Mammary epithelial cell (primary cell): ENCODE measurements at regions of chr2 and their contacts with region 1.

Region 1: DNA sequence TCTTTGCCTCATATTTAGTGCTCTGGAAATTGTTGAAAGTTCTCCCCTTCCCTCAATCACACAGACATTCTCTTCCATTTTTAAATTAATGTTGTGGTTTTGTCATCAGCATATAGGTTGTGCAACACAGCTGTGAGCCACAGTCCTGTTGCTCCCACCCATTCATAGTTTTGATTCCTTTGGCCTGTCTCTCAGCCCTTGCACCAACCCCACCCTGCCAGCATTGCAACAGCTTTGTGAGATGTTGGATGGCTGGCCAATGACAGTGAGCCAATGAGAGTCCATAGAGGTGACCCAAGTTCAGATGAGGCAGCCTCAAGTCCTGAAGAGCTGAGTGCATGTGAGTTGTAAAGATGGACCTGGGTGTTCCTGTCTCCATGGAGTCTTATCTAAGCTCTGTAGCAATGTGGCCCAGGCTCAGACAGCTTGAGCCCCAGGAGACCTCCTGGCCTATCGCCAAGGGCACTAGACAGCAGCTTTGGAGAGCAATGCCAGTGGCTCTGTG is 775.5 kb downstream of the RNF144A start:
- DNase-seq: peak; percentile 96
- H3K4me3 ChIP-seq: no peak overlapping the region
- H3K27ac ChIP-seq: peak overlapping the region; percentile 79
- H3K4me1 ChIP-seq: peaks cover 19% of the 10 kb centered on the region
- H3K27me3 ChIP-seq: no peaks in the 10 kb centered on the region
- CTCF ChIP-seq: no peak

Region 2: DNA sequence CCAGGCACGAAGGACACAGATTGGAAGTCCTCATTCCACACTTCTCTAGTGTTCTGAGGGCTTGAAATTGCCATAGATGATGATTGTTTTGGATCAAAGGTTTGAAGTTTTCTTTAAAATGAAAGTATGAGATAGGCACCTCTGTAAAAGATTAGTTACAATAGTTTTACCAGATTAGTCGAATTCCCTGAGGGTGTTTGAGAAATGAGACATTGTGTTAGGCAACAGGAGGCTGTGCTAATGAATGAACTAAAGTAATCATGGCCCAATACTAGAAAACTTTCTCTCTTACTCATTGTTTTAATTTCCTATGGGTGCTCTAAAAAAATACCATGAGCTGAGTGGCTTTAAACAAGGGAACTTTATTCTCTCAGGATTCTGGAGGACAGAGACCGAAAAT is 353.7 kb before region 1 on chr2:
- CTCF ChIA-PET with region 1: no interaction called
- dilution Hi-C with region 1: no loop called
- in situ Hi-C with region 1: no loop called
- intact Hi-C with region 1: no loop called
- DNase-seq: no peak
- H3K4me3 ChIP-seq: no peak overlapping the region
- H3K27ac ChIP-seq: no peak overlapping the region
- H3K4me1 ChIP-seq: no peaks in the 10 kb centered on the region
- H3K27me3 ChIP-seq: no peaks in the 10 kb centered on the region
- CTCF ChIP-seq: no peak

Region 3: DNA sequence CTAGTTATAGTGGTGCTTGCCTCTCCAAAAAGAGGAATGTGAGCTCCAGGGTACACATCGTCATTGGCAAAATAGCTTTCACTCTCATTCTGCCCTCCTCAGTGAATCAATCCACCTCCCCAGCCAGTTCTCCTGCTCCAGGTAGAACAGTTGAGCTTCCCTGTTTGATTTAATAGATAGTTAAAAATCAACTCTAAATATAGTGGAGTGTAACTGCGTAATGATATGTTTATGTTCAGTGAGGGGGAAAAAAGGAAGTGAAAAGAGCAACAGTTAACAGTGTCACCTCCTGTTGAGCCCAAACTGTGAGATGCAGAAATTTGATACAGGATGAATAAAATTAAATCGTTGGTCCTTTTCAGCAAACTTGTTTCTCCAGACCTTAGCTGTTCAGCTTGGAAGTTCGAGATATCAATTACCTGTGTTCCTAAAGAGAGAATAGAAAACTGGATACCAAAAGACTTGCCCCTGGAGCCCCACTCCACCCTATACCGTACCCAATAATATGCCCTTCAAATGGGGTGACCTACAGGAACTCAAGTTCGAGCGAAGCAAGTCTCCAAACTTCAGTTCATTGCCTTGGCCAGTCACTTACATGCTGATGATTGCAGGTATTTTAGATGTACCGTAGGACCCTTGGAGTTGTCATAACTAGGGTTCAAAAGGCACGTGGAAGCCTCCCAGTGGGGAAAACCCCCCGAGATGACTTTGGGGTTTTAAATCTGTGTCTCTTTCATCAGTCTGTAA is 67.1 kb before region 1 on chr2:
- CTCF ChIA-PET with region 1: no interaction called
- dilution Hi-C with region 1: loop called (anchors 5 kb)
- in situ Hi-C with region 1: no loop called
- intact Hi-C with region 1: no loop called
- DNase-seq: no peak
- H3K4me3 ChIP-seq: no peak overlapping the region
- H3K27ac ChIP-seq: no peak overlapping the region
- H3K4me1 ChIP-seq: peaks cover 12% of the 10 kb centered on the region
- H3K27me3 ChIP-seq: no peaks in the 10 kb centered on the region
- CTCF ChIP-seq: no peak

Region 4: GRCh38 chr2:7681881-7682461 is 10.7 kb before region 1 on chr2:
- CTCF ChIA-PET with region 1: no interaction called
- dilution Hi-C with region 1: no loop called
- in situ Hi-C with region 1: no loop called
- intact Hi-C with region 1: no loop called
- DNase-seq: no peak
- H3K4me3 ChIP-seq: no peak overlapping the region
- H3K27ac ChIP-seq: no peak overlapping the region
- H3K4me1 ChIP-seq: peaks cover 10% of the 10 kb centered on the region
- H3K27me3 ChIP-seq: no peaks in the 10 kb centered on the region
- CTCF ChIP-seq: no peak

Region 5: DNA sequence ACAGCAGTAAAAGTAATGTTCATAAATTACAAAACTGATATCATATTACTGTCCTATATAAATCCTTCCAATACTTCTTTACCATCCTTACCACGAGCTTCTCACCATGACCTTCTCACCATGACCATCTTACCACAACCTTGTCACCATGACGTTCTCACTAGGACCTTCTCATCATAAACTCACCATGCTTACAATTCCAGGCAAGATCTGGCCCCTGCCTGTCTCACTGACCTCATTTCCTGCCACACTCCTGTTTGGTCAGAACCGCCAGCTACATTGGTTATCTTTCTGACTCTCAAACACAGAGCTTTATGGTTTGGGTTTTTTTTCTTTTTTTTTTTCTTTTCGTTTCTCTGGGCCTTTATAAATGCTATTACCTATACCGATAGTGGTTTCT is 52.1 kb after region 1 on chr2:
- CTCF ChIA-PET with region 1: no interaction called
- dilution Hi-C with region 1: no loop called
- in situ Hi-C with region 1: no loop called
- intact Hi-C with region 1: loop called (anchors 5 kb)
- DNase-seq: peak; percentile 46
- H3K4me3 ChIP-seq: no peak overlapping the region
- H3K27ac ChIP-seq: no peak overlapping the region
- H3K4me1 ChIP-seq: peaks cover 6% of the 10 kb centered on the region
- H3K27me3 ChIP-seq: no peaks in the 10 kb centered on the region
- CTCF ChIP-seq: no peak

Region 6: DNA sequence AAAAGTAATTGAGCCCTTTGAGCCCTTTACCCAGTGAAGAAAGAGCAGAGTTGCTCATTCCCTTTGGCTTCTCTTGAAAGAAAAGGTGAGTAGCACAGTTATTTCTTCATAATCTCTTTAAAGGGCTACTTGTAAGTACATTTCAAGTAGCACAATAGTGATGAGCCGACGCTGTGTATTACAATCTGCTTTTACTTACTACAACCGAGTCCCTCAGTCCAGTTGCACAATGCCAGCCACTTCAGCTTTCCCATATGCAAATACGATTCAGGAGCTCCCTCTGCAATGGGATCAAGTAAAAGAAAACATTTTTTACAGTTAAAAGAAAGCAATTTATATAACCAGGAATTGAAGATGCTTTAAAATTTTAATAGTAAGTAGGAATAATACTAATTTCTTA is 93.0 kb after region 1 on chr2:
- CTCF ChIA-PET with region 1: no interaction called
- dilution Hi-C with region 1: no loop called
- in situ Hi-C with region 1: no loop called
- intact Hi-C with region 1: no loop called
- DNase-seq: no peak
- H3K4me3 ChIP-seq: no peak overlapping the region
- H3K27ac ChIP-seq: no peak overlapping the region
- H3K4me1 ChIP-seq: no peaks in the 10 kb centered on the region
- H3K27me3 ChIP-seq: no peaks in the 10 kb centered on the region
- CTCF ChIP-seq: no peak

Region 7: GRCh38 chr2:7950035-7950612 is 257.4 kb after region 1 on chr2:
- CTCF ChIA-PET with region 1: no interaction called
- dilution Hi-C with region 1: no loop called
- in situ Hi-C with region 1: no loop called
- intact Hi-C with region 1: no loop called
- DNase-seq: no peak
- H3K4me3 ChIP-seq: no peak overlapping the region
- H3K27ac ChIP-seq: no peak overlapping the region
- H3K4me1 ChIP-seq: no peaks in the 10 kb centered on the region
- H3K27me3 ChIP-seq: no peaks in the 10 kb centered on the region
- CTCF ChIP-seq: no peak